PC-9 (cell line): ENCODE measurements at regions of chr1 and their contacts with region 1.

Region 1: DNA sequence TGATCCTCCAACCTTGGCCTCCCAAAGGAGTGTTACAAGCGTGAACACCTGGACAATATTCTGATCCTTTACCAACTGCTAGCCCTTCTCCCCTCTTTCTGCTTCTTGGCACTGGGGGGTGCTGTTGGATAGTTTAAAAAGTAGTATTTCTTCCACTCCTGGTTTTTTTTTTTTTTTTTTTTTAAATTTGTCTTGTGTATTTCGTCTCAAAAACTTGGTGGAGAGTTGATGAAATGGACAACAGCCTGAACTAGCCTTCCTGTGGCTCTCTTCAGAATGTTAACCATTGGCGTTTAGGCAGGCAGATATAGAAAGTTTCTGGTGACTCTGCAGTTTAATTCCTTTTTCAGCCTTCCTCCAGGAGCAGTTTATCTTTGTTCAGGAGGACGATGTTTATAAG is 69.7 kb upstream of the USP24 start:
- DNase-seq: peak in 1 of 2 experiments; percentile 41
- H3K4me3 ChIP-seq: no peak overlapping the region
- H3K27ac ChIP-seq: no peak overlapping the region
- H3K4me1 ChIP-seq: peaks cover 4% of the 10 kb centered on the region; the same call in 1 of the 2 replicates
- H3K27me3 ChIP-seq: no peaks in the 10 kb centered on the region
- CTCF ChIP-seq: peak; percentile 79

Region 2: GRCh38 chr1:55318116-55318817 is 33.4 kb after region 1 on chr1:
- CTCF ChIA-PET with region 1: no interaction called
- POLR2A ChIA-PET with region 1: no interaction called
- intact Hi-C with region 1: no loop called
- DNase-seq: no peak
- H3K4me3 ChIP-seq: no peak overlapping the region
- H3K27ac ChIP-seq: no peak overlapping the region
- H3K4me1 ChIP-seq: peaks cover 34% of the 10 kb centered on the region
- H3K27me3 ChIP-seq: no peaks in the 10 kb centered on the region
- CTCF ChIP-seq: no peak

Region 3: GRCh38 chr1:55478742-55479141 is 193.9 kb after region 1 on chr1:
- CTCF ChIA-PET with region 1: no interaction called
- POLR2A ChIA-PET with region 1: no interaction called
- intact Hi-C with region 1: loop called (anchors 10 kb)
- DNase-seq: no peak
- H3K4me3 ChIP-seq: no peak overlapping the region
- H3K27ac ChIP-seq: no peak overlapping the region
- H3K4me1 ChIP-seq: peaks cover 11% of the 10 kb centered on the region
- H3K27me3 ChIP-seq: no peaks in the 10 kb centered on the region
- CTCF ChIP-seq: peak; percentile 54

Region 4: GRCh38 chr1:55893155-55893554 is 608.3 kb after region 1 on chr1:
- CTCF ChIA-PET with region 1: no interaction called
- POLR2A ChIA-PET with region 1: no interaction called
- intact Hi-C with region 1: loop called (anchors 5 kb)
- DNase-seq: peak in 1 of 2 experiments; percentile 43
- H3K4me3 ChIP-seq: no peak overlapping the region
- H3K27ac ChIP-seq: no peak overlapping the region
- H3K4me1 ChIP-seq: peaks cover 5% of the 10 kb centered on the region
- H3K27me3 ChIP-seq: no peaks in the 10 kb centered on the region
- CTCF ChIP-seq: peak; percentile 60

Region 5: DNA sequence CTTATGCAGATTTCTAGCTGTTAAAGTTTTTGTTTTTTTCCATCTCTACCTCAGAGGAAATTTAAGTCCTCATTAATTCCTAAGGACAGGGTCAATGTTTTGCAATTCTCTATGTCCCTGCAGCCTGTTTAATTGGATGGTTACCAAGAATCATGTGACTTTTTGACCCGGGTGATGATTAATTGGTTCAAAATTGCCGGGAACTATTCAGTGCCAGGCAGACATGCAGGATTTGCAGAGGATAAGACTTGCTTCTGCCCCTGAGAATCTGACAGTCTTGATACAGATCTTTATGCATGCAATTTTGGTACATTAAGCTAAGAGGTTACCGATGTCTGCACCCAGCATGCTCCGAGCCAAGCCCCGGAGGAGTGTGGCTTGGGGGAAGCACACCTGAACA is 1206.6 kb after region 1 on chr1:
- CTCF ChIA-PET with region 1: no interaction called
- POLR2A ChIA-PET with region 1: no interaction called
- intact Hi-C with region 1: loop called (anchors 10 kb)
- DNase-seq: no peak
- H3K4me3 ChIP-seq: no peak overlapping the region
- H3K27ac ChIP-seq: no peak overlapping the region
- H3K4me1 ChIP-seq: 0 out of 2 replicates have a peak, but pooled peaks cover 12% of the 10 kb centered on the region
- H3K27me3 ChIP-seq: no peaks in the 10 kb centered on the region
- CTCF ChIP-seq: no peak

Region 6: DNA sequence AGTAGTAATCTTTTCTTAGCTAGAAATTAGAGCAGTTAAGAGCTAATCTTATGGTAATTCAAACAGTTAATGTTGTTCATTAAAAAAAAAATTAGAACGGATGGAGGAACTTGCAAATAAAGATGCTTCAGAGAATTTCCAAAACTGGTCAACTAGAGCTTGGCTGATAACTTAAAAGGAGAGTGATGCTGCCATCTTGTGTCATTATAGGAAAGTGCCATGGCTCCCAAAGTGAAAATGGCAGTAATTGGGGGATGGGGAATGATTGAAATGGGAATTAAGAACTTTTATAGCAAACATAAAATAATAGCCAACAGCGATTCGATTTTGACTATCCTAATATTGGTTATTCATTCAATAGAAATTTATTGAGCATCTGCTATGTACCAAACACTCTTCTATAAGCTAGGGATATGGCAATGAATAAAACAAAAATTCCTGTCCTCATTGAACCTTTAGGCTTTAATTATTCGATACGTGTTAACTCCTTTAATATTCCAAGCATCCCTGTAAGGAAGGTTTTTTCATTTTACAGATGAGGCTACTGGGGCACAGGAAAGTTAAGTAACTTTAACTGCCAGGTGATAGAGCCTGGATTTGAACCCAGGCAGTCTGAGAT is 1300.2 kb after region 1 on chr1:
- CTCF ChIA-PET with region 1: interaction called, 5 read pairs
- POLR2A ChIA-PET with region 1: no interaction called
- intact Hi-C with region 1: loop called (anchors 1 kb)
- DNase-seq: peak; percentile 34 to 57
- H3K4me3 ChIP-seq: no peak overlapping the region
- H3K27ac ChIP-seq: no peak overlapping the region
- H3K4me1 ChIP-seq: peaks cover 9% of the 10 kb centered on the region
- H3K27me3 ChIP-seq: no peaks in the 10 kb centered on the region
- CTCF ChIP-seq: peak; percentile 86

Region 7: GRCh38 chr1:56821140-56821797 is 1536.4 kb after region 1 on chr1:
- CTCF ChIA-PET with region 1: no interaction called
- POLR2A ChIA-PET with region 1: no interaction called
- intact Hi-C with region 1: loop called (anchors 2 kb)
- DNase-seq: peak in 1 of 2 experiments; percentile 81
- H3K4me3 ChIP-seq: no peak overlapping the region
- H3K27ac ChIP-seq: no peak overlapping the region
- H3K4me1 ChIP-seq: peaks cover 11% of the 10 kb centered on the region; the same call in 1 of the 2 replicates
- H3K27me3 ChIP-seq: no peaks in the 10 kb centered on the region
- CTCF ChIP-seq: peak; percentile 96